CD4-positive, alpha-beta T cell (primary cell): ENCODE measurements at regions of chr22 and their contacts with region 1.

Region 1: GRCh38 chr22:25110846-25111578 is 88.6 kb upstream of the CRYBB3 start:
- DNase-seq: peak; percentile 32 to 80 (median 48)
- ATAC-seq: peak; percentile 86
- H3K4me3 ChIP-seq: peak overlapping the region; percentile 74
- H3K4me3 Mint-ChIP-seq: peak overlapping the region; percentile 90
- H3K27ac ChIP-seq: no peak overlapping the region
- H3K27ac Mint-ChIP-seq: peak overlapping the region; percentile 65
- H3K4me1 ChIP-seq: peaks cover 20% of the 10 kb centered on the region
- H3K4me1 Mint-ChIP-seq: peaks cover 29% of the 10 kb centered on the region
- H3K27me3 ChIP-seq: peaks cover 0 to 2% of the 10 kb centered on the region in 2 experiments
- H3K27me3 Mint-ChIP-seq: no peaks in the 10 kb centered on the region
- CTCF ChIP-seq: peak; percentile 63

Region 2: DNA sequence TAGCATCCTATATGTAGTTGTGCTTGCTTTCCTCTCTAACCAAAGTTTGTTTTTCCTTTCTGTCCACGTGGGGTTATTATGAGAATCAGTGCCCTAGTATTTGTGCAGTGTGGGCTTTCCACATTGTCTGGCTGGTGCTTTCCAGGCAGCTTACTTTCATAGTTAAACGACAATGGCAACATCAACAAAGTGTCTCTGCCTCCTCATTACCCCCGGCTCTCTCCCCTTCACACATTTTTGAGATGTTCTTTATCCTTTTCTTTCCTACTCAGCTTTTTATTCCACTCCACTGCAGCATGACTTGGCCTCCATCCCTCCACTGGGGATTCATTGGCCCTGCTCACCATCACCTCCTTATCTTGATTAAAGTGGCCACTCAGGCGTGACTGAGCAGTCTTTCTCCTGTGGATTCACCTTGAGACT is 821.3 kb before region 1 on chr22:
- CTCF ChIA-PET with region 1: no interaction called
- POLR2A ChIA-PET with region 1: no interaction called
- intact Hi-C with region 1: no loop called
- DNase-seq: no peak
- ATAC-seq: no peak
- H3K4me3 ChIP-seq: no peak overlapping the region
- H3K4me3 Mint-ChIP-seq: no peak overlapping the region
- H3K27ac ChIP-seq: no peak overlapping the region
- H3K27ac Mint-ChIP-seq: no peak overlapping the region
- H3K4me1 ChIP-seq: peaks cover 12% of the 10 kb centered on the region
- H3K4me1 Mint-ChIP-seq: peaks cover 48% of the 10 kb centered on the region
- H3K27me3 ChIP-seq: no peaks in the 10 kb centered on the region
- H3K27me3 Mint-ChIP-seq: no peaks in the 10 kb centered on the region
- CTCF ChIP-seq: no peak

Region 3: GRCh38 chr22:25057013-25057881 is 53.8 kb before region 1 on chr22:
- CTCF ChIA-PET with region 1: interaction called, 14 read pairs
- POLR2A ChIA-PET with region 1: interaction called, 5 read pairs
- intact Hi-C with region 1: loop called (anchors 1 to 2 kb)
- DNase-seq: peak; percentile 59 to 87 (median 72)
- ATAC-seq: peak; percentile 55
- H3K4me3 ChIP-seq: no peak overlapping the region
- H3K4me3 Mint-ChIP-seq: no peak overlapping the region
- H3K27ac ChIP-seq: no peak overlapping the region
- H3K27ac Mint-ChIP-seq: no peak overlapping the region
- H3K4me1 ChIP-seq: peaks cover 27% of the 10 kb centered on the region
- H3K4me1 Mint-ChIP-seq: peaks cover 33% of the 10 kb centered on the region
- H3K27me3 ChIP-seq: no peaks in the 10 kb centered on the region
- H3K27me3 Mint-ChIP-seq: no peaks in the 10 kb centered on the region
- CTCF ChIP-seq: peak; percentile 80

Region 4: GRCh38 chr22:25062386-25063085 is 48.5 kb before region 1 on chr22:
- CTCF ChIA-PET with region 1: interaction called, 14 read pairs
- POLR2A ChIA-PET with region 1: interaction called, 28 read pairs
- intact Hi-C with region 1: loop called (anchors 1 to 2 kb)
- DNase-seq: peak; percentile 72 to 93 (median 86)
- ATAC-seq: peak; percentile 88
- H3K4me3 ChIP-seq: peak overlapping the region; percentile 45
- H3K4me3 Mint-ChIP-seq: peak overlapping the region; percentile 87
- H3K27ac ChIP-seq: peak overlapping the region; percentile 43 to 91
- H3K27ac Mint-ChIP-seq: peak overlapping the region; percentile 96
- H3K4me1 ChIP-seq: peaks cover 68% of the 10 kb centered on the region
- H3K4me1 Mint-ChIP-seq: peaks cover 54% of the 10 kb centered on the region
- H3K27me3 ChIP-seq: no peaks in the 10 kb centered on the region
- H3K27me3 Mint-ChIP-seq: no peaks in the 10 kb centered on the region
- CTCF ChIP-seq: no peak

Region 5: DNA sequence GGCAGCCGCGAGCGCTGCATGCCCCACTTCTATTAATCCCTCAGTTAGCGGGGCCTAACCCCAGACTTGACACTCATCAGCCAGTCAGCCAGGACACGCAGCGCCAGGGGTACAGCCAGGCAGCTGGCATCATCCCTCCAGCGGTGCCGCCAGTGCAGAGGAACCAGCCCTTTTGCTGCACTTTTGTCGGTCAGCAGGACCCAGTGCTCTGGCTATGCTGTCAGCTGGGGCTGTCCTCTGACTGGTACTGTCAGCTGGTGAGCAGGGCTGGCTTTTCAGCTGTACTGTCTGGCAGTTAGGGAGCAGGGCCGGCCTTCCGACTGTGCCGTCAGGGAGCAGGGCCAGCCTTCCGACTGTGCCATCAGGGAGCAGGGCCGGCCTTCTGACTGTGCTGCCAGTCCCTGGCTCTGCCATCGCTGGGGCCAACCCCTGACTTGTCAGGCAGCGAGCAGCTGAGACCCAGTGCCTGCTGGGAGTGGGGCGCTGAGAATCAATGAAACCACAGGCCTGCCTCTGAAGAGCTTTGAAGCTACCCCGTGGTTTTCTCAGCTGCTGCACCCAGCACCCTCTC is 43.1 kb before region 1 on chr22:
- CTCF ChIA-PET with region 1: interaction called, 8 read pairs
- POLR2A ChIA-PET with region 1: interaction called, 28 read pairs
- intact Hi-C with region 1: loop called in 1 of 2 experiments (anchors 2 kb)
- DNase-seq: peak; percentile 75 to 97 (median 86)
- ATAC-seq: peak; percentile 83
- H3K4me3 ChIP-seq: peak overlapping the region; percentile 29
- H3K4me3 Mint-ChIP-seq: peak overlapping the region; percentile 73
- H3K27ac ChIP-seq: peak overlapping the region; percentile 83 to 90
- H3K27ac Mint-ChIP-seq: peak overlapping the region; percentile 96
- H3K4me1 ChIP-seq: peaks cover 93% of the 10 kb centered on the region
- H3K4me1 Mint-ChIP-seq: peaks cover 81% of the 10 kb centered on the region
- H3K27me3 ChIP-seq: no peaks in the 10 kb centered on the region
- H3K27me3 Mint-ChIP-seq: no peaks in the 10 kb centered on the region
- CTCF ChIP-seq: no peak

Region 6: GRCh38 chr22:25362215-25362882 is 251.3 kb after region 1 on chr22:
- CTCF ChIA-PET with region 1: no interaction called
- POLR2A ChIA-PET with region 1: no interaction called
- intact Hi-C with region 1: no loop called
- DNase-seq: peak; percentile 44 to 77 (median 57)
- ATAC-seq: peak; percentile 49
- H3K4me3 ChIP-seq: no peak overlapping the region
- H3K4me3 Mint-ChIP-seq: no peak overlapping the region
- H3K27ac ChIP-seq: no peak overlapping the region
- H3K27ac Mint-ChIP-seq: no peak overlapping the region
- H3K4me1 ChIP-seq: peaks cover 9% of the 10 kb centered on the region
- H3K4me1 Mint-ChIP-seq: no peaks in the 10 kb centered on the region
- H3K27me3 ChIP-seq: no peaks in the 10 kb centered on the region
- H3K27me3 Mint-ChIP-seq: no peaks in the 10 kb centered on the region
- CTCF ChIP-seq: peak; percentile 96

Region 7: GRCh38 chr22:26985931-26986782 is 1875.1 kb after region 1 on chr22:
- CTCF ChIA-PET with region 1: no interaction called
- POLR2A ChIA-PET with region 1: no interaction called
- intact Hi-C with region 1: no loop called
- DNase-seq: no peak
- ATAC-seq: no peak
- H3K4me3 ChIP-seq: no peak overlapping the region
- H3K4me3 Mint-ChIP-seq: no peak overlapping the region
- H3K27ac ChIP-seq: no peak overlapping the region
- H3K27ac Mint-ChIP-seq: no peak overlapping the region
- H3K4me1 ChIP-seq: no peaks in the 10 kb centered on the region
- H3K4me1 Mint-ChIP-seq: no peaks in the 10 kb centered on the region
- H3K27me3 ChIP-seq: peaks cover 0 to 3% of the 10 kb centered on the region in 2 experiments
- H3K27me3 Mint-ChIP-seq: no peaks in the 10 kb centered on the region
- CTCF ChIP-seq: no peak